H1 (cell line): ENCODE measurements at regions of chr3 and their contacts with region 1.

Region 1: GRCh38 chr3:69410250-69410649 is 24.4 kb upstream of the FRMD4B start:
- DNase-seq: peak in 1 of 2 experiments; percentile 76
- H3K4me3 ChIP-seq: no peak overlapping the region
- H3K27ac ChIP-seq: no peak overlapping the region
- H3K4me1 ChIP-seq: peaks cover 0 to 2% (median 0%) of the 10 kb centered on the region in 4 experiments; a peak in 2 of 7 replicates
- H3K27me3 ChIP-seq: no peaks in the 10 kb centered on the region
- CTCF ChIP-seq: peak; percentile 68 to 89 (median 72)
- EP300 ChIP-seq: no peak
- POLR2A ChIP-seq: no peak
- RAD21 ChIP-seq: peak; percentile 60 to 67

Region 2: GRCh38 chr3:69324362-69325025 is 85.8 kb before region 1 on chr3:
- CTCF ChIA-PET with region 1: interaction called, 16 read pairs
- POLR2A ChIA-PET with region 1: interaction called, 4 read pairs
- DNase-seq: peak in 1 of 2 experiments; percentile 5
- H3K4me3 ChIP-seq: no peak overlapping the region
- H3K27ac ChIP-seq: no peak overlapping the region
- H3K4me1 ChIP-seq: peaks cover 0 to 4% (median 0%) of the 10 kb centered on the region in 4 experiments; a peak in 1 of 7 replicates
- H3K27me3 ChIP-seq: no peaks in the 10 kb centered on the region; a peak in 1 of 7 replicates
- CTCF ChIP-seq: peak; percentile 49 to 83 (median 74)
- EP300 ChIP-seq: no peak
- POLR2A ChIP-seq: no peak
- RAD21 ChIP-seq: peak; percentile 88 to 94

Region 3: DNA sequence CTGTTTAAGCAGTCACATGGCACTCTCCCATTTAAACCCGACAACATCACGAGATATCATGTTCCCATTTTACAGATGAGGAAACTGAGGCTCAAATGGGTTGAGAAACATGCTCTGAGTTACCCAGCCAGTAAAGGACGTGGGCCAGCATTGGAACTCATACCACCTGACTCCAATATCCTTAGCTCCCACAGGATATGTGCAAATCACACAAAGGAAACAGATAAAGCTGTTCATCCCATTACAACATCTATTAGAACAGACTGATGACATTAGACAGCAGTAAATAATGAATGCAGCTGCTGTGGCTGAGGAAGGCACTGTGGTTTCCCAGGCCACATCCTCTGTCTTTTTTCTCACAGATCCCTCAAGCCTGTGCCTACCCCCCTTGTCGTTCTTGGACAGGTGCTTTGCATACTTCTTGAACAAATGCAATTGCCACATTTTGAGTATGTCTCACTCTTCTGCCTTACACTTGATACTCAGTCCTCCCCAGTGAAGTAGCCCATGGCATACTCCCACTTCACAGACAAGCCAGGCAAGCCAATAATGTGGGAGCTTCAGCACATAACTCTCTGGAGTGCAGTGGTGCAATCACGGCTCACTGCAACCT is 42.0 kb before region 1 on chr3:
- CTCF ChIA-PET with region 1: interaction called, 10 read pairs
- POLR2A ChIA-PET with region 1: no interaction called
- DNase-seq: no peak
- H3K4me3 ChIP-seq: no peak overlapping the region
- H3K27ac ChIP-seq: no peak overlapping the region
- H3K4me1 ChIP-seq: no peaks in the 10 kb centered on the region
- H3K27me3 ChIP-seq: no peaks in the 10 kb centered on the region
- CTCF ChIP-seq: no peak
- EP300 ChIP-seq: no peak
- POLR2A ChIP-seq: no peak
- RAD21 ChIP-seq: no peak

Region 4: DNA sequence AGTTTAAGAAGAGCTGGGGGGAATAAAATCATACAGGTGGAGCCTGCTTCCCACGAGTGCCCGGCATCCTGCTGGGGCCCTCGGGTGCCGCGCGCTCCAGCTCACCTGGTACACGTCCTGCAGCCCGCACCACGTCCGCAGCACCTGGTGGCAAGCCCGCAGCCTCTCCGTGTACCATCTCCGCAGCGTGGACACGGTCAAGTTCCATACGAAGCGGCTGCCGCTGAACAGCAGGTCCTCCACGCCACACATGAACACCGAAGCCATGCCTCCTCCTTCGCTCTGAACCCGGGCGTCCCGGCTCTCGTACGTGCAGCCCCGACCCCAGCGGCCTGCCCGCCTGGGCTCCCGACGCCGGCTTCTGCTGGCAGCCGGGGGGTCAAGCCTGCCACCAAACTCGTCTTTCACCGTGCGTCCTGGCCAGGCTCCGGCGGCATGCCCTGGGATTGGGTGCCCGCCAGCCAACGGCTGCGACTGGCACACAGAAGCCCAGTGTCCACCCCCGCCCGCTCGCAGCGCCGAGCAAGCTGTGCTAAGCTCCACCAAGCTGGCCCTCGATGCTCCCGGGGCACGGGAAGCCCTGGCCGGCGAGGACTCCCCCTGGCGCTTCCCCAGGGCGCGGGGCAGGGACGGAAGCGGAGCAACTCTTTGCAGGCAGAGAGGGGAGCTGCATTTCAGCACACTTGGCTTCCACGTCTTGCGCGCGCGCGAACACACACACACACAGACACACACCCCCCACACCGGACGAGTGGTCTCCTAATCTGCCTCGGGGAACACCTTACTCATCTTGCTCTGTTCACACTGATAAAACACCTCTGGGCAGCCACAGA is 24.3 kb before region 1 on chr3 and contains the start of gene FRMD4B:
- CTCF ChIA-PET with region 1: interaction called, 11 read pairs
- POLR2A ChIA-PET with region 1: no interaction called
- DNase-seq: peak in 1 of 2 experiments; percentile 74
- H3K4me3 ChIP-seq: peak within 1 kb of the TSS; percentile 30 to 61 (median 58)
- H3K27ac ChIP-seq: no peak within 1 kb of the TSS
- H3K4me1 ChIP-seq: peaks cover 0 to 4% (median 1%) of the 10 kb centered on the region in 4 experiments; a peak in 3 of 7 replicates
- H3K27me3 ChIP-seq: peaks cover 5 to 20% (median 15%) of the 10 kb centered on the region in 4 experiments
- CTCF ChIP-seq: no peak
- EP300 ChIP-seq: no peak
- POLR2A ChIP-seq: no peak
- RAD21 ChIP-seq: no peak
- total RNA-seq, gene FRMD4B: 5.4 and 7.2 TPM in 2 replicates

Region 5: DNA sequence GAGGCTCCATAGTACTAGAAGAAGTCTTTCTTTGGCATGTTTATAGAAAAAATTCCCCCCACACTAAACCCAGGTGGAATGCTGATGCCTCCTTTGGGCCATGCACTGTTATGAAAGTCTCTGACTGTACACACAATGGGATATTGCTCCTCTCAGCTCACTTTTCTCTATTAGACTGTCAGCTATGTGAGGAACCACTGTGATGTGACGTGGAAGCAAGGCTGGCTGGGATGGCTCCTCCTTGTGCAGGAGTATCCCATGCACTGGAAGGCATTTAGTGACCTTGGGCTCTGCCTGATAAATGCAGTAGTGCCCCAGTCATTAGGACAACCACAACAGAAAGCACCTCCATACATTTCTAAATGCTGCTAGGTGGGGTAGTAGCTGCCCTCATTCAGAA is 18.7 kb before region 1 on chr3:
- CTCF ChIA-PET with region 1: interaction called, 13 read pairs
- POLR2A ChIA-PET with region 1: no interaction called
- DNase-seq: no peak
- H3K4me3 ChIP-seq: no peak overlapping the region
- H3K27ac ChIP-seq: no peak overlapping the region
- H3K4me1 ChIP-seq: peaks cover 0 to 11% (median 7%) of the 10 kb centered on the region in 4 experiments; a peak in 4 of 7 replicates
- H3K27me3 ChIP-seq: peaks cover 0 to 2% (median 0%) of the 10 kb centered on the region in 4 experiments; a peak in 2 of 7 replicates
- CTCF ChIP-seq: no peak
- EP300 ChIP-seq: no peak
- POLR2A ChIP-seq: no peak
- RAD21 ChIP-seq: no peak

Region 6: DNA sequence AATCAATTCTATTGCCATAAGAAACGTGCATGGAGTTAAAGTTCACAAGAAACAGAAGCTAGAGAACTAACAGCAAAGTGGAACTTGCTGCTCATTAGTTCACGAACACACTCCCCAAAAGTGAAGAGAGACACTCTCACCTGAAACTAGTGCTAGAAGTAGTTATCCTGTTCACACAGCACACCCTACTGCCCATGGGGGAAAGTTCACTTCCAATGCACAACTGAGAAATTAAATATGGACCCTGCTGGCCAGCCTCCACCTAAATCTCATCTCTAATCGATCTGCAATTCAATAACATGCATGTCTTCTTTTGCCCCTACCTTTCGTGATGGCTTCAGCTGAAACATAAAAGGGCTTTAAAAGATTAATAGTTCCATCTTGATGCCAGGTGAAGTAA is 15.0 kb after region 1 on chr3:
- CTCF ChIA-PET with region 1: interaction called, 44 read pairs
- POLR2A ChIA-PET with region 1: no interaction called
- DNase-seq: no peak
- H3K4me3 ChIP-seq: no peak overlapping the region
- H3K27ac ChIP-seq: no peak overlapping the region
- H3K4me1 ChIP-seq: no peaks in the 10 kb centered on the region; a peak in 1 of 7 replicates
- H3K27me3 ChIP-seq: no peaks in the 10 kb centered on the region
- CTCF ChIP-seq: peak in 2 of 3 experiments; percentile 79 to 85; a peak in 3 of 4 replicates
- EP300 ChIP-seq: no peak
- POLR2A ChIP-seq: no peak
- RAD21 ChIP-seq: peak; percentile 83 to 89